Caco-2 (cell line): ENCODE measurements at regions of chr5 and their contacts with region 1.

Region 1: GRCh38 chr5:17216176-17216973 is 1.1 kb upstream of the BASP1 start:
- DNase-seq: peak; percentile 82 to 87
- H3K4me3 ChIP-seq: peak overlapping the region; percentile 65
- H3K4me3 Mint-ChIP-seq: peak overlapping the region; percentile 96
- H3K27ac Mint-ChIP-seq: peak overlapping the region; percentile 36
- H3K4me1 ChIP-seq: peaks cover 10% of the 10 kb centered on the region
- H3K4me1 Mint-ChIP-seq: peaks cover 14% of the 10 kb centered on the region
- H3K27me3 ChIP-seq: no peaks in the 10 kb centered on the region
- H3K27me3 Mint-ChIP-seq: no peaks in the 10 kb centered on the region
- CTCF ChIP-seq: peak; percentile 77 to 85

Region 2: DNA sequence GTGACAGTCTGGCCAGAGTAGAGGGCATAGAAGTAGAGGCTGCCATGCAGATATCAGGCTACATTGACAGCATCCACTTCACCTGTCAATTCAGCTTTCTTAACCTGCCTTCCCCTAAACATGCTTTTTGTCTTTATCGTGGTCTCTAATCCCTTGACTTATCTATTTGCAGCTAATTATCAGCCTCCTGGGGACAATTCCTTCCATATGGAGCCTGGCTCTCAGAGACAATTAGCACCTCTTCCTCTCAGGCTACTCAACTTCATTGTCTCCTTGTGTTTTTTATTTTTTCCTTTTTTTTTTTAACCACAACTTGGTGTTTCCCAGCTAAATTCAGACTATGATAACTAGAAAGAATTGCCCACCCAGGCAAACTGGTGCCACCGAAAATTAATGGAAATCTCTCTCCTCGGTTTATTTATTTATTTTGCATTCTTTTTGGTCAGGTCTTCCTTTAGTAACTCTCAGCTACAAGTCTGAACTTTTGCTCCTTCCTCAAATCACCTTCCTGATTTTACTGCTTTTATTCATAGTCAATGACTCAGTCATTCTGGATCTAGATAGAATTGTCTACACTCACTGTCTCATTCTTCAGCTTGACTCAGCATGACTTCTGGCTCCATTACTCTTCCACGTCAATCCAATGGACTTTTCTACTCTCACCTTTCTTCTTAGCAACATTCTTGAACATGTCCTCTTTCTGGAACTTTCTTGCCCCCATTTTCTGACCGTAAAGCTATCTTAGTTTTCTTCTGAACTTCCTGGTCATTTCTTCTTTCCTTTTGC is 62.0 kb before region 1 on chr5:
- CTCF ChIA-PET with region 1: no interaction called
- POLR2A ChIA-PET with region 1: no interaction called
- intact Hi-C with region 1: no loop called
- DNase-seq: no peak
- H3K4me3 ChIP-seq: no peak overlapping the region
- H3K4me3 Mint-ChIP-seq: no peak overlapping the region
- H3K27ac Mint-ChIP-seq: no peak overlapping the region
- H3K4me1 ChIP-seq: no peaks in the 10 kb centered on the region
- H3K4me1 Mint-ChIP-seq: no peaks in the 10 kb centered on the region
- H3K27me3 ChIP-seq: no peaks in the 10 kb centered on the region
- H3K27me3 Mint-ChIP-seq: no peaks in the 10 kb centered on the region
- CTCF ChIP-seq: no peak

Region 3: GRCh38 chr5:17204133-17204489 is 12.3 kb before region 1 on chr5:
- CTCF ChIA-PET with region 1: no interaction called
- POLR2A ChIA-PET with region 1: no interaction called
- intact Hi-C with region 1: no loop called
- DNase-seq: no peak
- H3K4me3 ChIP-seq: no peak overlapping the region
- H3K4me3 Mint-ChIP-seq: no peak overlapping the region
- H3K27ac Mint-ChIP-seq: no peak overlapping the region
- H3K4me1 ChIP-seq: no peaks in the 10 kb centered on the region
- H3K4me1 Mint-ChIP-seq: peaks cover 12% of the 10 kb centered on the region
- H3K27me3 ChIP-seq: no peaks in the 10 kb centered on the region
- H3K27me3 Mint-ChIP-seq: no peaks in the 10 kb centered on the region
- CTCF ChIP-seq: no peak

Region 4: GRCh38 chr5:17305964-17306716 is 89.8 kb after region 1 on chr5:
- CTCF ChIA-PET with region 1: interaction called, 9 read pairs
- POLR2A ChIA-PET with region 1: interaction called, 4 read pairs
- intact Hi-C with region 1: loop called (anchors 1 kb)
- DNase-seq: peak; percentile 90 to 91
- H3K4me3 ChIP-seq: peak overlapping the region; percentile 2; the same call in 1 of the 2 replicates
- H3K4me3 Mint-ChIP-seq: peak overlapping the region; percentile 61
- H3K27ac Mint-ChIP-seq: peak overlapping the region; percentile 93
- H3K4me1 ChIP-seq: peaks cover 32% of the 10 kb centered on the region
- H3K4me1 Mint-ChIP-seq: peaks cover 35% of the 10 kb centered on the region
- H3K27me3 ChIP-seq: no peaks in the 10 kb centered on the region
- H3K27me3 Mint-ChIP-seq: no peaks in the 10 kb centered on the region
- CTCF ChIP-seq: no peak

Region 5: GRCh38 chr5:17436761-17437221 is 220.4 kb after region 1 on chr5:
- CTCF ChIA-PET with region 1: interaction called, 6 read pairs
- POLR2A ChIA-PET with region 1: no interaction called
- intact Hi-C with region 1: loop called (anchors 5 kb)
- DNase-seq: no peak
- H3K4me3 ChIP-seq: no peak overlapping the region
- H3K4me3 Mint-ChIP-seq: no peak overlapping the region
- H3K27ac Mint-ChIP-seq: no peak overlapping the region
- H3K4me1 ChIP-seq: no peaks in the 10 kb centered on the region
- H3K4me1 Mint-ChIP-seq: no peaks in the 10 kb centered on the region
- H3K27me3 ChIP-seq: no peaks in the 10 kb centered on the region
- H3K27me3 Mint-ChIP-seq: no peaks in the 10 kb centered on the region
- CTCF ChIP-seq: no peak

Region 6: GRCh38 chr5:17679597-17680187 is 463.3 kb after region 1 on chr5:
- CTCF ChIA-PET with region 1: no interaction called
- POLR2A ChIA-PET with region 1: no interaction called
- intact Hi-C with region 1: loop called (anchors 10 kb)
- DNase-seq: no peak
- H3K4me3 ChIP-seq: no peak overlapping the region
- H3K4me3 Mint-ChIP-seq: no peak overlapping the region
- H3K27ac Mint-ChIP-seq: no peak overlapping the region
- H3K4me1 ChIP-seq: no peaks in the 10 kb centered on the region
- H3K4me1 Mint-ChIP-seq: no peaks in the 10 kb centered on the region
- H3K27me3 ChIP-seq: no peaks in the 10 kb centered on the region; the same call in none of the 2 replicates
- H3K27me3 Mint-ChIP-seq: no peaks in the 10 kb centered on the region
- CTCF ChIP-seq: no peak

Region 7: DNA sequence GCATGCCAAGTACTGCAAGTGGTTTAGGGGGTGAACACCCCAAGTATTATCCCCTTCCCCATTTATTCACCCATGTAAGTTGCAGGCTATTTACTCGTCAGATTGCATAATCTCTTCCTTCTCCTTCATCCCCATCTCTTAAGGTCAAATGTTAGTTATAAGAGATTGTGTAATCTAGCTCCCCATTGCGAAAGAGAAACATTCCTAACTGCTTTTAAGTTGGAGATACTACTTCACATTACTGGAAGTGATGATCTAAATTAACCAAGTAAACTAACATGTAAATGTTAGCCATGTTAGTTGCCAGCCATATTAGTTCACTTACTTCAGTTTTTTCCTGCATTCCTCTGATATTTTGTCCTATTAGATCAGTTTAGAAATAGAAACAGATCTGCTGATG is 680.2 kb after region 1 on chr5:
- CTCF ChIA-PET with region 1: no interaction called
- POLR2A ChIA-PET with region 1: no interaction called
- intact Hi-C with region 1: loop called (anchors 10 kb)
- DNase-seq: no peak
- H3K4me3 ChIP-seq: no peak overlapping the region
- H3K4me3 Mint-ChIP-seq: no peak overlapping the region
- H3K27ac Mint-ChIP-seq: no peak overlapping the region
- H3K4me1 ChIP-seq: no peaks in the 10 kb centered on the region
- H3K4me1 Mint-ChIP-seq: no peaks in the 10 kb centered on the region
- H3K27me3 ChIP-seq: no peaks in the 10 kb centered on the region
- H3K27me3 Mint-ChIP-seq: no peaks in the 10 kb centered on the region
- CTCF ChIP-seq: no peak

Region 8: DNA sequence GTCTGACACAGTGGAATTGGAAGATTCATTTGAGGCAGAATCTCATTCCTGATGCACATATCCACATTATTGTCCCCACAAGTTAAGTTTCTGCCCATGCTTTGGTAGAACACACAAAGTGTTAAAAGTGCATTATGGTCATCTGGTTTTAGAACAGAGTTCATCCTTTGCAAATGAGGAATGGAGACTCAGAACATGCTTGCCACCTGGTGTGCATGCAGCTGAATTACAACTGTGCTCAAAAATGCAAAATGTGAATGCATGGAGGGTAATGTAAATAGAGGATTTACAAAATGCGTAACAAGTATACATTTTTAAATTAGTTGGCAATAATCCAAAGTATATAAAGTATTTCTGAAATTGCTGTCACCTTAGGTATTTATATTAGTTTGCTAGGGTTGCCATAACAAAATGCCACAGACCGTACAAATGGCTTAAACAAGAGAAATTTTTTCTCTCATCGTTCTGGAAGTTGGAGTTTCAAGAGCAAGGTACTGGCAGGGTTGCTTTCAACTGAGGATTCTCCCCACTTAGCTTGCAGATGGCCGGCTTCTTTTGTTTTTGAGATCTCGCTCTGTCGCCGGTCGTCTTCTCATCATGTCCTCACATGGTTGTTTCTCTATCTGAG is 1089.0 kb after region 1 on chr5:
- CTCF ChIA-PET with region 1: interaction called, 6 read pairs
- POLR2A ChIA-PET with region 1: no interaction called
- intact Hi-C with region 1: loop called (anchors 1 kb)
- DNase-seq: peak in 1 of 2 experiments; percentile 43
- H3K4me3 ChIP-seq: no peak overlapping the region
- H3K4me3 Mint-ChIP-seq: no peak overlapping the region
- H3K27ac Mint-ChIP-seq: no peak overlapping the region
- H3K4me1 ChIP-seq: no peaks in the 10 kb centered on the region
- H3K4me1 Mint-ChIP-seq: no peaks in the 10 kb centered on the region
- H3K27me3 ChIP-seq: no peaks in the 10 kb centered on the region
- H3K27me3 Mint-ChIP-seq: peaks cover 4% of the 10 kb centered on the region
- CTCF ChIP-seq: peak; percentile 65 to 67